Activated B cell treated with CpG ODN at 0.5 μM for 24 hours (primary cell): ENCODE measurements at regions of chr3 and their contacts with region 1.

Region 1: GRCh38 chr3:152241142-152242017 is 27.3 kb upstream of the MBNL1 start:
- DNase-seq: no peak
- ATAC-seq: no peak
- H3K4me3 Mint-ChIP-seq: peak overlapping the region; percentile 62
- H3K27ac Mint-ChIP-seq: peak overlapping the region; percentile 90
- H3K4me1 Mint-ChIP-seq: peaks cover 77% of the 10 kb centered on the region
- H3K27me3 Mint-ChIP-seq: no peaks in the 10 kb centered on the region
- CTCF ChIP-seq: no peak

Region 2: DNA sequence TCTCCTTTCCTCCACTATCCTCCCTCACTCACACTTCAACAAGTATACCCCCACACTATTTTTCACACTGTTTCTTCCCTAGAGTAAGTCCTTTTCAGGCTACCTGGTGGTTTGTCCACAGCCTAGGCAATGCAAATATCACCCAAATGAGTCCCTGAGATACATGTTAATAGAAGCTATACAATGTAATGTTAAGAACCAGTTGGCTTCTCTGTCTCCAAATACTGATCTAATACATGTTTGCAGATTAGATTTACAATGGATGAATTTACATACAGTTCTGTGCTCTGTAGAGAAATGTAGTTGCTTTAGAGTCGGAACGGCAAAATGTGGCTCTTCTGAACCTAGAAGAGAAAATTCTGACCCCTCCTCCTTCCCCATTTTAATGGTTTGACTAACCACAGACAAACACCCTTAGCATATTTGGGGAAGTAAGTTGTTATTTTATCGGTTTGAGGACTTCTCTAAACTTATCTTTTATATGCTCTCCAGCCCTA is 36.2 kb before region 1 on chr3:
- CTCF ChIA-PET with region 1: interaction called, 6 read pairs
- POLR2A ChIA-PET with region 1: interaction called, 150 read pairs
- intact Hi-C with region 1: loop called (anchors 1 kb)
- DNase-seq: no peak
- ATAC-seq: peak; percentile 72
- H3K4me3 Mint-ChIP-seq: peak overlapping the region; percentile 95
- H3K27ac Mint-ChIP-seq: peak overlapping the region; percentile 99
- H3K4me1 Mint-ChIP-seq: peaks cover 58% of the 10 kb centered on the region
- H3K27me3 Mint-ChIP-seq: no peaks in the 10 kb centered on the region
- CTCF ChIP-seq: no peak

Region 3: DNA sequence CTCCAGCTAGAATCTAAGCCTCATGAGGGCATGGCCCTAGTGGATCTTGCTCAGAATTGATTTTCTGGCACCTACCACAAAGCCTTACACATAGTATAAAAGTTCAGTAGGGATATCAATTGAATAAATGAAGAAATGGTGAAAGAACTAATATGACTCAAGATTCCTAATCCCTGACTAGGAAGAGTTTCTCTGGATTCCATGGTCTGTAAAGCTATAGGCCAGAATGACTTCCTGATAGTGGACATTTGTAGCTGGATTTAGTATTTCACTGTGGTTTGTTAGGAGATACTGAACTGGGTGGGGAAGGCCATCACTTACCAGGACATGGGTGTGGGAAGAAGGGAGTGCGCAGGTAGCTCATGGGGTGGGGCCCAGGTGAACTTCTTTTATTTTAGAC is 1089.5 kb after region 1 on chr3:
- CTCF ChIA-PET with region 1: no interaction called
- POLR2A ChIA-PET with region 1: no interaction called
- intact Hi-C with region 1: no loop called
- DNase-seq: no peak
- ATAC-seq: no peak
- H3K4me3 Mint-ChIP-seq: no peak overlapping the region
- H3K27ac Mint-ChIP-seq: no peak overlapping the region
- H3K4me1 Mint-ChIP-seq: no peaks in the 10 kb centered on the region
- H3K27me3 Mint-ChIP-seq: peaks cover 3% of the 10 kb centered on the region
- CTCF ChIP-seq: no peak